Posterior cingulate gyrus (tissue), 11 donors: ENCODE measurements at regions of chr10 and their contacts with region 1.

Region 1: GRCh38 chr10:29131952-29132820 is 156.7 kb upstream of the LYZL1 start:
- DNase-seq: no peak

Region 2: GRCh38 chr10:28839600-28840007 is 292.6 kb before region 1 on chr10:
- intact Hi-C with region 1: no loop called
- DNase-seq: no peak

Region 3: GRCh38 chr10:28951484-28951883 is 180.7 kb before region 1 on chr10:
- intact Hi-C with region 1: no loop called
- DNase-seq: no peak

Region 4: GRCh38 chr10:28991326-28992270 is 140.6 kb before region 1 on chr10:
- intact Hi-C with region 1: no loop called
- DNase-seq: peak in 1 of 10 donors; percentile 12

Region 5: DNA sequence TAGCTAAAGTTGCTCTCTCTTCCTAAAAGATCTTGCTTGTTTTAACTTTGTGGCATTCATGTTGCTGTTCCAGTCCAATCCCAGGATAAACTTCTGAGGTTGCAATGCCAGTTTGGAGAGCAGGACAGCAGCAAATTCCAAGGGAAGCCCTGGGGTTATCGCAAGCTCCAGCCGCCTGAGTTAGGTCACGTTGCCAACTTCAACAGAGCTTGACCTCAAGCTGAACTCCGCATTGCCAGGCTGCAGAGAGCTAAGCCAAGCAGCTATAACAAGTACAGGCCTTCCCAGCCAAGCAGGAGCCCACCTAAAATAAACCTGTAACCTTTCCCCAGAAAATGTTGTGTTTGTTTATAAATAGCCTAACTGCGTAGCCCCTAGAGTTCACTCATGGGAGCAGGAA is 17.8 kb after region 1 on chr10:
- intact Hi-C with region 1: no loop called
- DNase-seq: no peak

Region 6: DNA sequence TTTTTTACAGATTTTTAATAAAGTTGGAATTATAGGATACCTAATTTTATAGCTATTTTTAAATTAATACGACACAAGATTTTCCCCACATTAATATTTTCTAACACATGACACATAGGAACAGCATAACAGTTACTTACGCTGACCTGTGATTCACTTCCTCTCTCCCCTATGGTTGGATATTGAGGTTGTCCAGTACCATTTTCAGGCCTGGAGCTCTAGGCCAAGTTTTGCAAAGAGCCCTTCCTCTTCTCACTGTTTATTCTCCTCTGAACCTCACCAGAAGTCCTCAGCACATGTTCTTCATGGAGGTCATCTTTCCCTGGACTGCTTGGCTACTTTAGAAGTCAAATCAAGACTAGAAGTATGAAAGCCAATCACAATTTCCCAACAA is 184.8 kb after region 1 on chr10:
- intact Hi-C with region 1: loop called (anchors 10 kb)
- DNase-seq: no peak